GM10248 (cell line): ENCODE measurements at regions of chr10 and their contacts with region 1.

Region 1: GRCh38 chr10:22657566-22658225 is 56.7 kb downstream of the PIP4K2A start:
- DNase-seq: no peak
- CTCF ChIP-seq: no peak

Region 2: GRCh38 chr10:22669163-22669711 is 11.5 kb after region 1 on chr10:
- CTCF ChIA-PET with region 1: interaction called, 12 read pairs
- POLR2A ChIA-PET with region 1: no interaction called
- DNase-seq: no peak
- CTCF ChIP-seq: no peak

Region 3: DNA sequence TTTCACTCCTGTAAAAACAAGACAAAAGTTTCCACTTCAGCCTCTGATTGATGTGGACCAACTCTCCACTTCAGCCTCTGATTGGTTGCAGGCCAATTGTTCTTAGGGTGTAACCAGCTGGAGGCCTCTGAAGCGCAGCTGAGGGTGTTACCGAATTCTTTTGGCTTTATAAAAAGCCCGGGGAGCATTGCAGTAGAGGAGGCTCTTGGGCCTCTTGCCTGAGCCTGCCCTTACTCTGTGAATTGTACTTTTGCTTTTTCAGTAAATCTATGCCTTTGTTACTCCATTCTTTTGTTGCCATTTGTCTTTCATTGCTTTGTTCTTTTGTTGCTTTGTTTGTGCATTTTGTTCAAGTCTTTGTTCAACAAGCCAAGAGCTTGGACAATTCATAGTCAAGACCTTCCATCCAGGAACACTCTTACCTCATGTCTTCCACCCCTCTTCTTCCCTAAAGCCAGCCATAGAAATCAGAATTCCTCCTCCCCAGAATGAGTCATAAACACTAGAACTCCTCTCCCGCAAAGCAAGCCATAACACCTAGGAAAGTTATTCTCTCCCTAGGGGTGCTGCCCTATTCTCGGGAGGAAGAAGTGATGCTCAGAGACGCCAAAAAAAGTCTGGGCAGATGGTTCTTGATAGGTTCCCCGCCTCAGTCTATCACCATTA is 216.6 kb after region 1 on chr10:
- CTCF ChIA-PET with region 1: no interaction called
- POLR2A ChIA-PET with region 1: no interaction called
- DNase-seq: no peak
- CTCF ChIP-seq: no peak